ENCODE measurements at regions of chr11 and their contacts with region 1.

Region 1: GRCh38 chr11:79314906-79315681 is 125.7 kb downstream of the TENM4 start:
- DNase-seq: no peak
- H3K4me3 ChIP-seq: no peak overlapping the region
- H3K27ac ChIP-seq: no peak overlapping the region
- H3K27me3 ChIP-seq: peaks cover 0 to 14% (median 0%) of the 10 kb centered on the region in 45 donors
- CTCF ChIP-seq: no peak

Region 2: DNA sequence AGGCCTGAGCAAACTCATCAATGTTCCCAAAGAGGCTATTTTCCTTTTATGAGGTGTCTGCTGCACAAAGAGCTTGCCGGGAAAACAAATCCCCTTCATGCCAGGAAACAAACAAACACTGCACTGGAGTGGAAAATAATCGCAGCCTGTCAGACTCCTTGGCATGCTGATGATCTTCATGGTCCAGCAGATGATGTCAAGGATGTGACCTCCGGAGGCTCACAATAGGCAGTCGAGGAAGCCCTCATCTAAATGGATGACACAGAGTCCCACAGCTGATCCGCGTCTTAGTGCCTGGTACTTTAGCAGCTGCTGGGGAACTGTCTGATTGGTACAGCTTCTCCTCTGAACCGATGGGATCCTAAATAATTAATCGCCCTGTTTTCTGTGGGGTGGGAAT is 61.8 kb before region 1 on chr11:
- intact Hi-C with region 1: loop called (anchors 5 kb)
- DNase-seq: peak; percentile 14 to 92 (median 80)
- H3K4me3 ChIP-seq: peak overlapping the region in 12 of 59 donors; percentile 0 to 33 (median 24)
- H3K27ac ChIP-seq: peak overlapping the region in 39 of 59 donors; percentile 3 to 83 (median 50)
- H3K27me3 ChIP-seq: no peaks in the 10 kb centered on the region
- CTCF ChIP-seq: peak in 3 of 56 donors; percentile 15 to 31 (median 22)